Adrenal gland (tissue), 19 donors: ENCODE measurements at regions of chr12 and their contacts with region 1.

Region 1: GRCh38 chr12:91355150-91356006 is 172.8 kb upstream of the DCN start:
- DNase-seq: peak; percentile 61 to 91 (median 75)
- H3K4me3 ChIP-seq: no peak overlapping the region
- H3K27ac ChIP-seq: no peak overlapping the region
- H3K4me1 ChIP-seq: no peaks in the 10 kb centered on the region
- H3K27me3 ChIP-seq: no peaks in the 10 kb centered on the region
- CTCF ChIP-seq: peak; percentile 68 to 86 (median 80)
- POLR2A ChIP-seq: no peak

Region 2: GRCh38 chr12:90091021-90091651 is 1264.2 kb before region 1 on chr12:
- intact Hi-C with region 1: no loop called
- DNase-seq: peak in 3 of 7 donors; percentile 6 to 18 (median 15)
- H3K4me3 ChIP-seq: no peak overlapping the region
- H3K27ac ChIP-seq: no peak overlapping the region
- H3K4me1 ChIP-seq: no peaks in the 10 kb centered on the region
- H3K27me3 ChIP-seq: no peaks in the 10 kb centered on the region
- CTCF ChIP-seq: no peak
- POLR2A ChIP-seq: no peak

Region 3: DNA sequence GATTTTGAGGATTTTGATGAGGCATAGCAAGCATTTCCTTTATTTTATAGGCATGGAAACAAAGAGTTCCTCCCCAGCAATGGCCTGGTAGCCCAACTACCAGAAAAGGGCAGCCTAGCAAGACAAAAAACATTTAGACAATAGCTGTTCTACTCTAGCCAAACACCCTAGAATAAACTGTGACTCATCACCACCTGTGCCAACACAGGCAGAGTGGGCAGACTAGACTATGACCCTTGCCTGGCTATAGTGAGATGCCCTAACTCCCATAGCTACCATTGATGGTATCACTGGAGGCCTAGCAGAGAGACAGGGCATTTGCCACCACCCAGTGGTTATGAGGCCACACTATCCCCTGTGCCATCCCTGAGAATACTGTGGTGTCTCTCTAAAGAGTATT is 384.9 kb before region 1 on chr12:
- intact Hi-C with region 1: loop called in 1 of 2 experiments (anchors 5 kb)
- DNase-seq: no peak
- H3K4me3 ChIP-seq: no peak overlapping the region
- H3K27ac ChIP-seq: no peak overlapping the region
- H3K4me1 ChIP-seq: no peaks in the 10 kb centered on the region
- H3K27me3 ChIP-seq: no peaks in the 10 kb centered on the region
- CTCF ChIP-seq: no peak
- POLR2A ChIP-seq: no peak

Region 4: DNA sequence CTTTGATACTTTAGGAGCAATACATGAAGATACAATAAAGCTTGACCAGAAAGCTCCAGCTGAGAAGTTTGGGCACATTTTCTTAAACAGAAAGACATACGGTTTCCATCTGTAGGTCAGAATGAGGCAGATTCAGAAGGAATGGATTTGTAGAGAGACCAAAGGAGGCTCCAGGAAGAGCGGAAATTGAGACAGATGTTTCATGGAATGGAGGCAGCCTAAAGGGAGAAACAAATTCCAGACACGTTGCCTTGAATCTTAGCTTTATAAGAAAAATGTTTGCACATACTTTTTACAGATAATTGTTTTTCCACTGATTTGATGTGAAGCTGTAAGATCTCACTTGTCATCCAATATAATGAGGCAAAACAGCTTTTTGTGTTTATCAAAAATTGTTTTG is 375.4 kb before region 1 on chr12:
- intact Hi-C with region 1: loop called in 1 of 2 experiments (anchors 5 kb)
- DNase-seq: no peak
- H3K4me3 ChIP-seq: no peak overlapping the region
- H3K27ac ChIP-seq: peak overlapping the region in 1 of 5 donors; percentile 21
- H3K4me1 ChIP-seq: no peaks in the 10 kb centered on the region
- H3K27me3 ChIP-seq: no peaks in the 10 kb centered on the region
- CTCF ChIP-seq: no peak
- POLR2A ChIP-seq: no peak

Region 5: DNA sequence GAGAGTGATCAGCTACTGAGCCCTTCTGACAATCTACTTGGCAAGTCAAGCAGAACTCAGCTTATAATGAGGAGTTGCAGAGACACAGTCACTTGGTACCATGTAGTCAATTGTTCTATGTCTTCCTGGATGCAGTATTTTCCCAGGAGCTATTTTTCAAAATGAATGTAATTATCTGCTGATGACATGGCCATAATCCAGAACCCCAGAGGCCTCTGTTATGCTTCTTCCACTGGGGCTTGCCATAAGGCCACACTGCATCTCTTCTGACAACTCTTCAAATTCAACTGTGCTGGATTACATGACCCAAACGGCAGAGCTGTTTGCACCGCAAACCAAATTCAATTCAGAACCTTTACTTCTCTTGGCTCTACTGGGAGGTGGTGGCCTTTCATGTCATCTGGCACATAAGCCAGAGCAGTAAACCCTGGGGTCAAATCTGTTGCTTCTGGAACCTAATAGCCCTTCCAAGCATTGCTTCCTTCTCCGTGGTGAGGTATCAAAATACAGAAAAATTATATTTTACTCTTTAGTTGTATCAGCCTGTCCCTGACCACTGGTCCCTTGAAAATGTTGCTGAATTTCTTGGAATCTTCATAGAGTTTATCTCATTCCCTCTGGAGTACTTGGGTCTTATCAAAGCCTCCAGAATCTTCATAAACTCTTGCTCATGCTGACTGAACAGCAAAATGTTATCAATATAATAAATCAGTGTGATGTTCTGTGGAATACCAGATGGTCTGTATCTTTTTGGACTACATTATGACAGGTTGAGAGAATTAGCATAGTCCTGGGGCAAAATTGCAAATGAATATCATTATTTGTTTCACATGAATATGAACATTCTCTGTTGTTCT is 93.3 kb before region 1 on chr12:
- intact Hi-C with region 1: no loop called
- DNase-seq: peak in 1 of 7 donors; percentile 18
- H3K4me3 ChIP-seq: no peak overlapping the region
- H3K27ac ChIP-seq: peak overlapping the region in 3 of 5 donors; percentile 1 to 31 (median 22)
- H3K4me1 ChIP-seq: no peaks in the 10 kb centered on the region
- H3K27me3 ChIP-seq: no peaks in the 10 kb centered on the region
- CTCF ChIP-seq: no peak
- POLR2A ChIP-seq: no peak